ENCODE measurements at regions of chr10 and their contacts with region 1.

Region 1: GRCh38 chr10:131885391-131886161 is 15.2 kb upstream of the PPP2R2D start:
- DNase-seq: peak; percentile 38 to 58
- ATAC-seq: peak; percentile 85 to 92
- H3K4me3 ChIP-seq: no peak overlapping the region
- H3K27ac ChIP-seq: no peak overlapping the region
- H3K4me1 ChIP-seq: no peaks in the 10 kb centered on the region
- H3K27me3 ChIP-seq: peaks cover 0 to 3% (median 0%) of the 10 kb centered on the region in 3 donors
- CTCF ChIP-seq: peak; percentile 92 to 99 (median 96)
- POLR2A ChIP-seq: no peak

Region 2: DNA sequence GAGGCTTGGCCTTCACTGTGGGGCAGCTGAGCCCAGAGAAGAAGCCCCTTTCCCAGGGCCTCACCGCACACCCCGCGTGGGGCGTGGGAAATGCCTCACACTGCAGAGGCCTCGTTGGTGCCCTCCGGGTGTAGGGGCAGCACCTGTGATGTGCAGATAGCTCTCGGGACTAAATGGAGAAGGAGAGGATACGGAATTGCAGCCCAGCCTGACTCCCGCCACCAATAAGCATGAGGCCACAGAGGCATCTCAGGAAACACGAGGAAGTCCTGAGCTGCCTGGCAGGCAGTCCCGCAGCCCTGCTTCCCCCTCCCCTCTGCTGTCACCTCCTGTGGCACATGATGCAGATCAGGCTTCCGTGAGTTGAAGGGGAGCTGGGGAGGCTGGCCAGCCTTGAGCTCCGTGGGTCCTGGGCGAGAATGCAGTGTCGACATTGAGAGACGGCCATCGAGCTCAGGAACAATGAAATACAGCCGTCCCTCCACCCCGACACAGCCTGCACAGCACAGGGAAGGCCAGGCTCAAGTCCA is 44.4 kb before region 1 on chr10:
- in situ Hi-C with region 1: no loop called
- intact Hi-C with region 1: no loop called
- DNase-seq: no peak
- ATAC-seq: no peak
- H3K4me3 ChIP-seq: no peak overlapping the region
- H3K27ac ChIP-seq: no peak overlapping the region
- H3K4me1 ChIP-seq: no peaks in the 10 kb centered on the region
- H3K27me3 ChIP-seq: peaks cover 0 to under 1% (median 0%) of the 10 kb centered on the region in 3 donors
- CTCF ChIP-seq: no peak
- POLR2A ChIP-seq: no peak

Region 3: GRCh38 chr10:131943021-131943814 is 57.6 kb after region 1 on chr10:
- in situ Hi-C with region 1: no loop called
- intact Hi-C with region 1: loop called (anchors 5 kb)
- DNase-seq: no peak
- ATAC-seq: no peak
- H3K4me3 ChIP-seq: no peak overlapping the region
- H3K27ac ChIP-seq: no peak overlapping the region
- H3K4me1 ChIP-seq: peaks cover under 1% of the 10 kb centered on the region in 2 donors
- H3K27me3 ChIP-seq: no peaks in the 10 kb centered on the region
- CTCF ChIP-seq: peak in 4 of 5 experiments; percentile 17 to 39 (median 32)
- POLR2A ChIP-seq: no peak

Region 4: GRCh38 chr10:132142411-132143161 is 257.0 kb after region 1 on chr10:
- in situ Hi-C with region 1: loop called in 2 of 4 experiments (anchors 10 kb)
- intact Hi-C with region 1: loop called (anchors 1 kb)
- DNase-seq: no peak
- ATAC-seq: peak; percentile 66 to 74
- H3K4me3 ChIP-seq: no peak overlapping the region
- H3K27ac ChIP-seq: no peak overlapping the region
- H3K4me1 ChIP-seq: no peaks in the 10 kb centered on the region
- H3K27me3 ChIP-seq: no peaks in the 10 kb centered on the region
- CTCF ChIP-seq: peak; percentile 49 to 91 (median 83)
- POLR2A ChIP-seq: no peak

Region 5: DNA sequence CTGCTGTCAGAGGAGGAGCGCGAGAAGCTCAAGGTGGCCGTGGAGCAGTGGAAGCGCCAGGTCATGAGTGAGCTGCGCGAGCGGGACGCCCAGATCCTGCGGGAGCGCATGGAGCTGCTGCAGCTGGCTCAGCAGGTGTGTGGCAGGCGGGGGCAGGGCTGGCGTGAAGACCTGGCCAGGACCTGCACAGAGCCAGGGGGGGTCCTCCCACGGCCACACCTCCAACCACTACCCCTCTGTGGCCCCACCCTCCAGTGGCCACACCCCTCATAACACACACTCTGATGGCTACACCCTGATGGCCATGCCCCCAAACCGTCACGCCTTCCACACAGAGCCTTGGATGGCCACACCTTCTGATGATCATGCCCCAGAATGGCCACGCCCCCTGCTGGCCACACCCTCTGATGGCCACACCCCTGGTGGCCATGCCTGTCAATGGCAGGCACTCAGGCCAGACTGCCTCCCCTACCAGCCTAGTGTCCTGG is 277.7 kb after region 1 on chr10:
- in situ Hi-C with region 1: no loop called
- intact Hi-C with region 1: loop called (anchors 5 kb)
- DNase-seq: no peak
- ATAC-seq: no peak
- H3K4me3 ChIP-seq: no peak overlapping the region
- H3K27ac ChIP-seq: no peak overlapping the region
- H3K4me1 ChIP-seq: peaks cover 11 to 18% of the 10 kb centered on the region in 2 donors
- H3K27me3 ChIP-seq: no peaks in the 10 kb centered on the region
- CTCF ChIP-seq: peak in 1 of 5 experiments; percentile 21
- POLR2A ChIP-seq: no peak

Measured in gastrocnemius medialis (tissue), 4 donors.